Activated CD8-positive, alpha-beta T cell treated with anti-CD3 and anti-CD28 coated beads for 36 hours (primary cell): ENCODE measurements at regions of chr1 and their contacts with region 1.

Region 1: DNA sequence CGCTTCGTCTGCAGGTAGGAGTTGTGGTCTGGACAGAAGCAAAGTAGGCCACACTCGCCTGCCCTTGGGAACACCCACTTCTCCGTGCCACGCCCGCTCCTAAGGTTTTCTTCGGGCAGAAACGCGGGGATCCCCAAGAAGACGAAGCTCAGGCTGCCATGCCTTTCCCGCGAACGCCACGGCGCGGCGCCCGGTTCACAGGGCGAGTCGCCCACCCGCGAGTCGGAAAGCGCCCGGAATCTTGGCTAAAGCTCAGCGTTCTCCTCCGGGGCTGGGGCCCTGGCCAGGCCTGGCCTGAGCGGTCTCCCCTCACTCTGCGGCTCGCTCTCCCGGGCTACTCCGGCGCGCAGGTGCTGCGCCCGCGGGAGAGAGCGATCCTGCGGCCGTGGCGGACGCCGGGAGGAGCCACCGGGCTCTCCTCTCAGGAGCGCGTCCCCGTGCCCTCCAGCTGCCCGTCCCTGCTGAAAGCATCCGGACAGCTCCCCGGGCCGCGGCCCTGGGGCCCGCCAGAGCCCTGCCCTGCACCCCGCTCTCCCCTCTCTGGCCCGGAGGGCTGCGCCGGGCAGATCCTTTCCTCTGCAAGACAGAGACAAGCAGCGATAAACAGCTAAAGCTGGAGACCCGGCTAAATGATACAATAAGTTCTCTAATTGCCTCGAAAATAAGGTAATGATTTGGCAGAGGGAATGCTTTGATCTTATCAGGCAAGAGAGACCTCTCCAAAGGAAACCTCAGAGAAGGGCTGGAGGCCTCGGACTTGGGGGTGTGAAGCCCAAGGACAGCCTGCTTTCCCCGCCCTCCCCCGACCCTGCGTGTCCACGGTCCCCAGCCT is 6.7 kb upstream of the WNT2B start:
- DNase-seq: peak; percentile 64
- ATAC-seq: peak; percentile 66
- H3K4me3 Mint-ChIP-seq: peak overlapping the region; percentile 45
- H3K27ac Mint-ChIP-seq: no peak overlapping the region
- H3K4me1 Mint-ChIP-seq: peaks cover 8% of the 10 kb centered on the region
- H3K27me3 Mint-ChIP-seq: peaks cover 50% of the 10 kb centered on the region
- CTCF ChIP-seq: peak; percentile 64

Region 2: DNA sequence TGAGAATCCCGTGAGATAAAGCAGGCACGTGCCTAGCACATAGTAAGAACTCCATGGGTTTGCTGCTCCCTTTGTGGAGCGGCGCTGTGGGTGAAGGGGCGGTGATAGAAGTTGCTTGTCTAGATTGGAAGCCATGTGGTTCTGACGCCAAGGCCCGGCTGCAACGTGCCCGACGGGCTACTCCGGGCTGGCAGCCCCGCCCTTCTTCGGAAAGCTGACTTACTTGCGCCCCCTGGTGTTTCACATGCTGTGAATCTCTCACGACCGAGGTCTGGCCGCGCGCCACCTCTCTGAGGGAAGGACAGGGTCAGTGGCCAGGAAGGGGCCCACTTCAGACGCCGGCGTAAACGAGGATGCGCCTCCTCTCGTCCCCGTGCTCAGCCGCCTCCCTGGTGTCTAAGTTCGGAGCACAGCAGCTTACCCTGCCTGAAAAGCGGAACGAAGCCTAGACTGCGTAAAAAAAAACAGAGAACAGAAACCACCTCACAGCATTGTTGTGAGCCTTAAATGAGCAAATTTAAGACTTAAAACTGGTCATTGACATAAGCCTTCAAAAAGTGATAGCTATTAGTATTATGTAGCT is 35.9 kb before region 1 on chr1:
- CTCF ChIA-PET with region 1: interaction called, 11 read pairs
- POLR2A ChIA-PET with region 1: interaction called, 3 read pairs
- intact Hi-C with region 1: no loop called
- DNase-seq: peak; percentile 92
- ATAC-seq: peak; percentile 98
- H3K4me3 Mint-ChIP-seq: peak overlapping the region; percentile 71
- H3K27ac Mint-ChIP-seq: peak overlapping the region; percentile 32
- H3K4me1 Mint-ChIP-seq: peaks cover 9% of the 10 kb centered on the region
- H3K27me3 Mint-ChIP-seq: peaks cover 35% of the 10 kb centered on the region
- CTCF ChIP-seq: peak; percentile 86

Region 3: GRCh38 chr1:112614460-112615065 is 112.5 kb after region 1 on chr1:
- CTCF ChIA-PET with region 1: interaction called, 20 read pairs
- POLR2A ChIA-PET with region 1: interaction called, 3 read pairs
- intact Hi-C with region 1: loop called (anchors 10 kb)
- DNase-seq: peak; percentile 29
- ATAC-seq: no peak
- H3K4me3 Mint-ChIP-seq: no peak overlapping the region
- H3K27ac Mint-ChIP-seq: no peak overlapping the region
- H3K4me1 Mint-ChIP-seq: peaks cover 7% of the 10 kb centered on the region
- H3K27me3 Mint-ChIP-seq: no peaks in the 10 kb centered on the region
- CTCF ChIP-seq: peak; percentile 73

Region 4: DNA sequence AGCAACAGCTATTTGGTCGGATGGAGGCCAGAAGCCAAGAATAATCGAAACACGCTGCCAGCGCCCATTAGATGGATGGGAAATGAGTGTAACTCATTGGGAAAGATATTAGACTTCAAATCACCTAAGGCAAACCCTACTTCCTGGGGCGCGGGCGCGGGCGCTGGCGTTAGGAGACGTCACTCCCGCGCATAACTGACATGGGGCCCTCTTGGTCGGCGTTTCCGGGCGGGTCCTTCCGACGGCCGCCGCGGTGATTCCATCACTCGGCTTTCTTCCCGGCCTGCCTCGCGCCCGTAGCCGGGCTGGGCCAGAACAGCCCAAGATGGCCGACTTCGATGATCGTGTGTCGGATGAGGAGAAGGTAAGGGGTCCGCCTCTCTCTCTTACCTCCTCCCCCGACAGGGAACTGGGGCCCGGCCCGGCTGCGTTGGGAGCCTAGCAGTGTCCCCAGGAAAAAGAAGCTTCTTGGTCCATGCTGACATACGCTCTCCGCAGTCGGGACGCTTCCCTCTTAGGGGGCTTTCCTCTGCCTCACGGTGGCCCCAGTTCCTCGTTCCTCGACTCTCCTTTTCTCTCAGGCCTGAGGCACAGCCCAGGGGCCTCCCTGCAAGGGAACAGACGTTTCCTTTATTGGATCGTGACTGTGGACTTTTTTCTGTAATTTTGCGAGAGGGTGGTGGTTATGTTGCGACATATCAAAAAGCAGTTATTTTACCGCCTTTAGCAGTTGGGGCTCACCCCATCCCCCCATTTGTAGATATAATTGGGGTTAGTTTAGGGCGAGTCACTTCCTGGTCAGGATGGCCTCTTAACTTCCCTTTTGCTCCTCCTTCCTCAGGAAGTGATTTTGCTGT is 117.7 kb after region 1 on chr1 and contains the start of gene CAPZA1:
- CTCF ChIA-PET with region 1: interaction called, 20 read pairs
- POLR2A ChIA-PET with region 1: interaction called, 3 read pairs
- intact Hi-C with region 1: loop called (anchors 10 kb)
- DNase-seq: peak; percentile 95
- ATAC-seq: peak; percentile 85
- H3K4me3 Mint-ChIP-seq: peak within 1 kb of the TSS; percentile 99
- H3K27ac Mint-ChIP-seq: peak within 1 kb of the TSS; percentile 100
- H3K4me1 Mint-ChIP-seq: peaks cover 29% of the 10 kb centered on the region
- H3K27me3 Mint-ChIP-seq: no peaks in the 10 kb centered on the region
- CTCF ChIP-seq: no peak
- total RNA-seq, gene CAPZA1: 220 to 230 TPM

Region 5: GRCh38 chr1:112706908-112707663 is 205.1 kb after region 1 on chr1 and contains the start of gene RHOC:
- CTCF ChIA-PET with region 1: interaction called, 25 read pairs
- POLR2A ChIA-PET with region 1: no interaction called
- intact Hi-C with region 1: loop called (anchors 2 kb)
- DNase-seq: peak; percentile 75
- ATAC-seq: peak; percentile 50
- H3K4me3 Mint-ChIP-seq: peak within 1 kb of the TSS; percentile 71
- H3K27ac Mint-ChIP-seq: no peak within 1 kb of the TSS
- H3K4me1 Mint-ChIP-seq: peaks cover 40% of the 10 kb centered on the region
- H3K27me3 Mint-ChIP-seq: peaks cover 13% of the 10 kb centered on the region
- CTCF ChIP-seq: peak; percentile 89
- total RNA-seq, gene RHOC: 34.2 to 34.7 TPM